ENCODE measurements at regions of chr10 and their contacts with region 1.

Region 1: GRCh38 chr10:133537551-133538545 is 10.7 kb downstream of the CYP2E1 start:
- DNase-seq: no peak
- H3K4me3 ChIP-seq: no peak overlapping the region
- H3K27ac ChIP-seq: no peak overlapping the region
- H3K4me1 ChIP-seq: no peaks in the 10 kb centered on the region
- H3K27me3 ChIP-seq: no peaks in the 10 kb centered on the region
- CTCF ChIP-seq: no peak
- EP300 ChIP-seq: no peak
- POLR2A ChIP-seq: no peak

Region 2: GRCh38 chr10:132774902-132775747 is 762.7 kb before region 1 on chr10:
- in situ Hi-C with region 1: no loop called
- intact Hi-C with region 1: loop called (anchors 5 kb)
- DNase-seq: peak; percentile 69
- H3K4me3 ChIP-seq: no peak overlapping the region
- H3K27ac ChIP-seq: peak overlapping the region in 1 of 4 donors; percentile 75
- H3K4me1 ChIP-seq: peaks cover 0 to 11% (median 4%) of the 10 kb centered on the region in 4 donors
- H3K27me3 ChIP-seq: peaks cover 2% of the 10 kb centered on the region
- CTCF ChIP-seq: no peak
- EP300 ChIP-seq: no peak
- POLR2A ChIP-seq: no peak

Region 3: GRCh38 chr10:132997517-132998224 is 540.2 kb before region 1 on chr10:
- in situ Hi-C with region 1: no loop called
- intact Hi-C with region 1: no loop called
- DNase-seq: no peak
- H3K4me3 ChIP-seq: no peak overlapping the region
- H3K27ac ChIP-seq: no peak overlapping the region
- H3K4me1 ChIP-seq: no peaks in the 10 kb centered on the region
- H3K27me3 ChIP-seq: no peaks in the 10 kb centered on the region
- CTCF ChIP-seq: no peak
- EP300 ChIP-seq: no peak
- POLR2A ChIP-seq: no peak

Measured in transverse colon (tissue), 4 donors.